Aorta (tissue), 5 donors: ENCODE measurements at regions of chr18 and their contacts with region 1.

Region 1: GRCh38 chr18:67515945-67516538 is 478 bp downstream of the DSEL start:
- DNase-seq: peak; percentile 86 to 93
- ATAC-seq: peak; percentile 88
- H3K4me3 ChIP-seq: peak overlapping the region; percentile 68 to 98
- H3K27ac ChIP-seq: peak overlapping the region; percentile 73 to 78
- H3K4me1 ChIP-seq: peaks cover 0 to 4% of the 10 kb centered on the region in 2 donors
- H3K27me3 ChIP-seq: no peaks in the 10 kb centered on the region

Region 2: GRCh38 chr18:67278984-67279383 is 237.1 kb before region 1 on chr18:
- intact Hi-C with region 1: loop called in 1 of 2 experiments (anchors 10 kb)
- DNase-seq: no peak
- ATAC-seq: no peak
- H3K4me3 ChIP-seq: no peak overlapping the region
- H3K27ac ChIP-seq: no peak overlapping the region
- H3K4me1 ChIP-seq: peaks cover 0 to 5% of the 10 kb centered on the region in 2 donors
- H3K27me3 ChIP-seq: no peaks in the 10 kb centered on the region

Region 3: DNA sequence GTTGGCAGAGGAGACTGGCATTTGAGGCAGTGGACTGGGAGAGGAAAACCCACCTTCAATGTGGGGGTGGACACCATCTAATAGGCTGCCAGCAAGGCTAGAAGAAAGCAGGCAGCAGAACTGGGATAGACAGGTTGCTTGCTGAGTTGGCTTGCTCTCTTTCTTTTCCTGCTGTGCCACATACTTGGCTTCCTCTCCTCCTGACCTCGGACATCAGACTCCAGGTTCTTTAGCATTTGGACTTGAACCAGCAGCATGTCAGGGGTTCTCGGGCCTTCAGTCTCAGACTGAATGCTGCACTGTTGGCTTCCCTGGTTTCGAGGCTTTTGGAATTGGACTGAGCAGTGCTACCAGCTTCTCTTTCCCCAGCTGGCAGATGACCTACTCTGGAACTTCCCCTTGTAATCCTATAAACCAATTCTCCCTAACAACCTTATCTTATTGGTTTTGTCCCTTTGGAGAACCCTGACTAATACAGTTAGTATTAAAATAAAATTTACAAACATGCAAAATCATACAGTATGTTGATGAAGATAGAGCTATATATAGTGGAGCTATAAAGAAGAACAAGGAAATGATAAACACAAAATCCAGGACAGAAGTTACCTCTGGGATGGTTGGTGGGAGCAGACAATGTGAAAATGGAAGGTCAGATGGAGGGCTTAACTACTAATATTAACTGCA is 15.4 kb before region 1 on chr18:
- intact Hi-C with region 1: no loop called
- DNase-seq: no peak
- ATAC-seq: no peak
- H3K4me3 ChIP-seq: no peak overlapping the region
- H3K27ac ChIP-seq: no peak overlapping the region
- H3K4me1 ChIP-seq: peaks cover 0 to 2% of the 10 kb centered on the region in 2 donors
- H3K27me3 ChIP-seq: no peaks in the 10 kb centered on the region

Region 4: DNA sequence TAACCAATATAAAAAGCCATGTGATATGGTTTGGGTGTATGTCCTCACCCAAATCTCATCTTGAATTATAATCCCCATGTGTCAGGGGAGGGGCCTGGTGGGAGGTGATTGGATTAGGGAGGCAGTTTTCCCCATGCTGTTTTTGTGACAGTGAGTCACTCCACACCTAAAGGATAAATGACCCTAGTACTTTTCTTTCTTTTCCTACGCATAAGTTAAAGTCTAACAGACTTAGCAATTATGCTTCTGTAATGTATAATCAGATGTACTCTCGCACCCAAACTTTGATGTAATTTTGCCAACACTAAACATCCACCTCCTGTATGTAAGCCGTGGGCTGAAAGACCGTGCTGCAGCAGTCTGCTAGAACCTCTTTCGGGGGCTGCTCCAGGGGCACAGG is 97.7 kb after region 1 on chr18:
- intact Hi-C with region 1: loop called in 1 of 2 experiments (anchors 5 kb)
- DNase-seq: no peak
- ATAC-seq: no peak
- H3K4me3 ChIP-seq: no peak overlapping the region
- H3K27ac ChIP-seq: no peak overlapping the region
- H3K4me1 ChIP-seq: no peaks in the 10 kb centered on the region
- H3K27me3 ChIP-seq: no peaks in the 10 kb centered on the region

Region 5: DNA sequence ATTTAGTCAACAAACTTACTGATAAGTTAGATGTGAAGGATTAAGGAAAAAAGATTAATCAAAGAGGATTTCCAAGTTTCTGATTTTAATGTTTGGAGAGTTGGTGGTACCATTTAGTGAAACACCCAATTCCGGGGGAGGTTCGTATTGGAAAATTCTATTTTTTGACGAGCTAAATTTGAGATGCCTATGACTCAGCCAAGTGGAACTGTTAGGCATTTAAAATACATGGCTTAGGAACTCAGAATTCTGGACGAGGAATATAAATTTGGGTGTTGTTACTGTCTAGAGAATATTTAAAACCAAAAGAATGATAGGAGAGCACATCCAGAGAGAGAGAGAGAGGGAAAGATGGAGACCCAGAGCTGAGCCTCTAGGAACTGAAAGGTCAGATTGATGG is 1095.3 kb after region 1 on chr18:
- intact Hi-C with region 1: loop called in 1 of 2 experiments (anchors 10 kb)
- DNase-seq: no peak
- ATAC-seq: no peak
- H3K4me3 ChIP-seq: no peak overlapping the region
- H3K27ac ChIP-seq: peak overlapping the region; percentile 43 to 44
- H3K4me1 ChIP-seq: peaks cover 0 to 4% of the 10 kb centered on the region in 2 donors
- H3K27me3 ChIP-seq: no peaks in the 10 kb centered on the region

Region 6: DNA sequence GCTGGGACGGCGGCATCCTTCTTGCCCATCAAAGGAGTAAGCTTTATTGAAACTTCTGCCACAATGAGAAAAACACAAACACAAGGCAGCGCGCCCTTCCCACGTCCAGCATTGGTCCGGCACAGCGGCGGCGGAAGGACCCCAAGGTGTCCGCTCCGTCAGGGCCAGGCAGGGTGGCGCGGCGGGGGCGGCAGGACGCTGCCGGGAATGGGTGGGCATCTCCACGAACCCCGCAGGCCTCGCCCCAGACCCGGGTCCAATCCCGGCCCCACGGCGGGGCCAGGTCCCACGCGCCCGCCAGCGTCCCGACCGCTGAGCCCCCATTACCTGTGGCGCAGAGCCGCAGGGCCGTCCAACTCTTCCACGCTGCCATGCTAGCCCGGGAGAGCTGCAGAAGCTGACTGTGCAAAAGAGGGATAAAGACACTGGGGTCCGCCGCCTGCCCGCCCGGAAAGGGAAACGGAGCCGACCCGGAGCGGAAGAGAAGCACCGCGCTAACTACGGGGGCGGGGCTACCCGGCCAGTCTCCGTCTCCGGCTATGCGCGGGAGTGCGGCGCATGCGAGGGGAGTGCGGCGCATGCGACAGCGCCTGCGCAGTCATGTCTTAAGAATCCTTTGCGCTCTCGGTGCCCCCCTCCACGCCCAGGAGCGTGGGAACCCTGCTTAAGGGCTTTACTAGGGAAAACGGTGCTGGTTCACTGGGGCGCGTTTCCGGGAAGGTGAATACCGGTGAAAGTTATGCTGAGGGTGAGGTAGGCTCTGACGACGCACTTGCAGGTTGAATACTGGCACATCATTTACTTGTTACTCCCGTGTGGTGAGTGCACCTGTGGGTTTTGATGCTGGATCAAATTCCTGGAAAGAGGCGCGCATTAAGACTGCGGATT is 1198.8 kb after region 1 on chr18 and contains the start of gene TMX3:
- intact Hi-C with region 1: loop called in 1 of 2 experiments (anchors 10 kb)
- DNase-seq: peak; percentile 95 to 97
- ATAC-seq: peak; percentile 99
- H3K4me3 ChIP-seq: peak within 1 kb of the TSS; percentile 88 to 89
- H3K27ac ChIP-seq: peak within 1 kb of the TSS in 1 of 2 donors; percentile 43
- H3K4me1 ChIP-seq: peaks cover 0 to 3% of the 10 kb centered on the region in 2 donors
- H3K27me3 ChIP-seq: no peaks in the 10 kb centered on the region
- total RNA-seq, gene TMX3: 52.3 to 59.6 TPM